IMR-90 (cell line): ENCODE measurements at regions of chr7 and their contacts with region 1.

Region 1: DNA sequence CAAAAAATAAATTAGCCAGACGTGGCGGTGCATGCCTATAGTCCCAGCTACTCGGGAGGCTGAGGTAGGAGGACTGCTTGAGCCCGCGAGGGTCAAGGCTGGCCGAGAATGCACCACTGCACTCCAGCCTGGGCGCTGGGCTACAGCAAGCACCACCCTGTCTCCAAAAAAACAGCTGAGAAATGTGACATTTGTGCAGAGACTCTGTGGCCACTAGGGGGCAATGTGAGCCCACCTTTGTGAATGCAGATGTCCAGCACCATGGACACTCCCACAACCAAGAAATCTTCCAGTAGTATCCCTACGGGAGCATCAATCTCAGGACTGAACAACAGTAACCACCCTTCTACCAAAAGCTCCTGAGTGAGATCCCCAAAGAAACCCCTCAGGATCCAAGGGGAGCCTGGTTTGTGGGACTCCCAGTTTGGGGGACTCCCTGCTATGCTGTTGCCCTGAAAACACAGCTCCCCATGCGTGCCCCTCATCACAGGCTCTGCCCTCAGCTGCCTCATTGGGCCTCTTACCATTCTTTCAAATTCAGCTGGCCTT is 6.2 kb upstream of the AHCYL2 start:
- DNase-seq: peak; percentile 78
- ATAC-seq: peak; percentile 98
- H3K4me3 ChIP-seq: no peak overlapping the region
- H3K27ac ChIP-seq: no peak overlapping the region
- H3K4me1 ChIP-seq: no peaks in the 10 kb centered on the region
- H3K27me3 ChIP-seq: no peaks in the 10 kb centered on the region
- CTCF ChIP-seq: peak; percentile 97
- POLR2A ChIP-seq: no peak
- RAD21 ChIP-seq: peak; percentile 98

Region 2: GRCh38 chr7:129073738-129074137 is 144.8 kb before region 1 on chr7:
- CTCF ChIA-PET with region 1: no interaction called
- POLR2A ChIA-PET with region 1: no interaction called
- dilution Hi-C with region 1: no loop called
- in situ Hi-C with region 1: no loop called
- intact Hi-C with region 1: no loop called
- DNase-seq: no peak
- ATAC-seq: no peak
- H3K4me3 ChIP-seq: no peak overlapping the region
- H3K27ac ChIP-seq: no peak overlapping the region
- H3K4me1 ChIP-seq: no peaks in the 10 kb centered on the region
- H3K27me3 ChIP-seq: peaks cover 25% of the 10 kb centered on the region
- CTCF ChIP-seq: no peak
- POLR2A ChIP-seq: no peak
- RAD21 ChIP-seq: no peak

Region 3: GRCh38 chr7:129298268-129298893 is 79.8 kb after region 1 on chr7:
- CTCF ChIA-PET with region 1: interaction called, 16 read pairs
- POLR2A ChIA-PET with region 1: no interaction called
- dilution Hi-C with region 1: no loop called
- in situ Hi-C with region 1: no loop called
- intact Hi-C with region 1: loop called (anchors 1 kb)
- DNase-seq: peak; percentile 51
- ATAC-seq: no peak
- H3K4me3 ChIP-seq: no peak overlapping the region
- H3K27ac ChIP-seq: no peak overlapping the region
- H3K4me1 ChIP-seq: no peaks in the 10 kb centered on the region
- H3K27me3 ChIP-seq: no peaks in the 10 kb centered on the region
- CTCF ChIP-seq: peak; percentile 72
- POLR2A ChIP-seq: no peak
- RAD21 ChIP-seq: peak; percentile 70

Region 4: DNA sequence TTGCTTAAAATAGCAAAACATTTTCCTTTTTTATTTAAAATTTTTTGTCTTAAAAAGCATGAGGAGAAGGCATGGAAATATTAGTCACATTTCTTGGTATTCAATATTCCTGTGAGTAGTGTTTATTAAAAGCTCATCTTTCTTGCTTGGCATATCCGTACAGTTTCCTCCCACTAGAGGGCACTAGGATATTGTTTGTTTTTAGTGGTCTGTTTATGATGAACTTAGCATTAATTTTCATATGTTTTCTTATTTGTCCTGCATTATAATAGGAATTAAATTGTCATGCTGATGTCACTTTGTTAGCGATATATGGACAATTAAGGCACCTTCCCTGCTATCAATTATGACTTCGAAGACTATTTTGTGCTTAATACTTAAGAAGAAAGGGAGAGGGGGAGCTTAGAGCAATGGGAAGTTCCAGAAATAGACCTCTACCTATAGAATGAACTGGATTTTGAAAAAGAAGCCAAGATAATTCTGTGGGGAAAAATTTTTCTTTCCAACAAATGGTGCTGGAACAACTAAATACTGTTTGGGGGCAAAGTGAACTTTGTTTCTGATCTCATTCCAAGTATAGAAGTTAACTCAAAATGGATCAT is 124.6 kb after region 1 on chr7:
- CTCF ChIA-PET with region 1: interaction called, 3 read pairs
- POLR2A ChIA-PET with region 1: no interaction called
- dilution Hi-C with region 1: no loop called
- in situ Hi-C with region 1: no loop called
- intact Hi-C with region 1: loop called (anchors 2 kb)
- DNase-seq: peak; percentile 75
- ATAC-seq: peak; percentile 80
- H3K4me3 ChIP-seq: no peak overlapping the region
- H3K27ac ChIP-seq: no peak overlapping the region
- H3K4me1 ChIP-seq: peaks cover 2% of the 10 kb centered on the region; the same call in 1 of the 2 replicates
- H3K27me3 ChIP-seq: no peaks in the 10 kb centered on the region; the same call in 1 of the 2 replicates
- CTCF ChIP-seq: peak; percentile 77
- POLR2A ChIP-seq: no peak
- RAD21 ChIP-seq: peak; percentile 57

Region 5: GRCh38 chr7:129468087-129468486 is 249.5 kb after region 1 on chr7:
- CTCF ChIA-PET with region 1: interaction called, 9 read pairs
- POLR2A ChIA-PET with region 1: no interaction called
- dilution Hi-C with region 1: no loop called
- in situ Hi-C with region 1: loop called (anchors 5 kb)
- intact Hi-C with region 1: loop called (anchors 1 kb)
- DNase-seq: peak; percentile 75
- ATAC-seq: peak; percentile 79
- H3K4me3 ChIP-seq: no peak overlapping the region
- H3K27ac ChIP-seq: no peak overlapping the region
- H3K4me1 ChIP-seq: peaks cover 1% of the 10 kb centered on the region; the same call in 1 of the 2 replicates
- H3K27me3 ChIP-seq: no peaks in the 10 kb centered on the region
- CTCF ChIP-seq: no peak
- POLR2A ChIP-seq: no peak
- RAD21 ChIP-seq: no peak

Region 6: GRCh38 chr7:129635300-129636029 is 416.9 kb after region 1 on chr7:
- CTCF ChIA-PET with region 1: no interaction called
- POLR2A ChIA-PET with region 1: no interaction called
- dilution Hi-C with region 1: no loop called
- in situ Hi-C with region 1: loop called (anchors 10 kb)
- intact Hi-C with region 1: loop called (anchors 2 kb)
- DNase-seq: peak; percentile 86
- ATAC-seq: peak; percentile 97
- H3K4me3 ChIP-seq: no peak overlapping the region
- H3K27ac ChIP-seq: no peak overlapping the region
- H3K4me1 ChIP-seq: no peaks in the 10 kb centered on the region; the same call in 1 of the 2 replicates
- H3K27me3 ChIP-seq: no peaks in the 10 kb centered on the region
- CTCF ChIP-seq: peak; percentile 92
- POLR2A ChIP-seq: no peak
- RAD21 ChIP-seq: peak; percentile 88

Region 7: DNA sequence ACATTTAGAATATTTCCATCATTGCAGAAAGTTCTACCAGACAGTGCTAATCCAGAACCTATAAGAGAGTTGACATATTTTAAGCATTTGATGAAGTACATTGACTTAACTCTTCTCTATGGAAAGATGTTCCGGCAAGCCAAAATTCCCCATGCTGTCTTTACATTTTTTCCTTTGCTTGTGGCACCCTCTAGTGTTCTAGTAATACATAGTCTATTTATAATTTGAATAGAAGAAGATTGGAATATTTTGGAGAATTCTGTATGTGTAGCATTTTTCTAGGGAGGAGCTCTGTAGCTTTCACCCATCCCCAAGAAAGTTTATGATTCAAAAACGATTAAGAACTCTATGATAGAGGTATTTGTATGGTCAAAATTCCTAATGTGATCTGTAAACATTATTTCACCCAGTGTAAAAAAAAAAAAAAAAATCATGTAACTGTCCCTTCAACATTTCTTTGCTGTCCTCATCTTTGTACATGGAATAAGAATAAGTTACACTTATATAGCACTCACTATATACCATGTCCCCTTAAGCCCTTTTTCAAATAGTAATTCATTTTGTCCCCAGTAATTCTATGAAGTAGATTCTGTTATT is 426.1 kb after region 1 on chr7:
- CTCF ChIA-PET with region 1: interaction called, 8 read pairs
- POLR2A ChIA-PET with region 1: no interaction called
- dilution Hi-C with region 1: no loop called
- in situ Hi-C with region 1: loop called (anchors 10 kb)
- intact Hi-C with region 1: loop called (anchors 2 kb)
- DNase-seq: peak; percentile 68
- ATAC-seq: peak; percentile 55
- H3K4me3 ChIP-seq: no peak overlapping the region
- H3K27ac ChIP-seq: no peak overlapping the region
- H3K4me1 ChIP-seq: peaks cover 12% of the 10 kb centered on the region
- H3K27me3 ChIP-seq: no peaks in the 10 kb centered on the region
- CTCF ChIP-seq: peak; percentile 67
- POLR2A ChIP-seq: no peak
- RAD21 ChIP-seq: peak; percentile 73